CD8-positive, alpha-beta T cell (primary cell): ENCODE measurements at regions of chr2 and their contacts with region 1.

Region 1: GRCh38 chr2:105977212-105977611 is 216.9 kb downstream of the UXS1 start:
- DNase-seq: no peak
- ATAC-seq: no peak
- H3K4me3 ChIP-seq: no peak overlapping the region
- H3K4me3 Mint-ChIP-seq: no peak overlapping the region
- H3K27ac ChIP-seq: no peak overlapping the region
- H3K27ac Mint-ChIP-seq: peak overlapping the region; percentile 82
- H3K4me1 ChIP-seq: peaks cover 58% of the 10 kb centered on the region
- H3K4me1 Mint-ChIP-seq: peaks cover 52% of the 10 kb centered on the region
- H3K27me3 ChIP-seq: no peaks in the 10 kb centered on the region
- H3K27me3 Mint-ChIP-seq: no peaks in the 10 kb centered on the region
- CTCF ChIP-seq: no peak

Region 2: GRCh38 chr2:105990624-105991023 is 13.4 kb after region 1 on chr2:
- CTCF ChIA-PET with region 1: interaction called, 3 read pairs
- POLR2A ChIA-PET with region 1: interaction called, 3 read pairs
- intact Hi-C with region 1: loop called in 1 of 2 experiments (anchors 1 kb)
- DNase-seq: peak in 1 of 9 experiments; percentile 26
- ATAC-seq: no peak
- H3K4me3 ChIP-seq: no peak overlapping the region
- H3K4me3 Mint-ChIP-seq: no peak overlapping the region
- H3K27ac ChIP-seq: no peak overlapping the region
- H3K27ac Mint-ChIP-seq: no peak overlapping the region
- H3K4me1 ChIP-seq: peaks cover 26% of the 10 kb centered on the region
- H3K4me1 Mint-ChIP-seq: peaks cover 11% of the 10 kb centered on the region
- H3K27me3 ChIP-seq: no peaks in the 10 kb centered on the region
- H3K27me3 Mint-ChIP-seq: no peaks in the 10 kb centered on the region
- CTCF ChIP-seq: no peak

Region 3: GRCh38 chr2:106115250-106115649 is 138.0 kb after region 1 on chr2:
- CTCF ChIA-PET with region 1: no interaction called
- POLR2A ChIA-PET with region 1: no interaction called
- intact Hi-C with region 1: no loop called
- DNase-seq: no peak
- ATAC-seq: no peak
- H3K4me3 ChIP-seq: no peak overlapping the region
- H3K4me3 Mint-ChIP-seq: no peak overlapping the region
- H3K27ac ChIP-seq: peak overlapping the region in 1 of 2 experiments; percentile 14
- H3K27ac Mint-ChIP-seq: peak overlapping the region; percentile 66
- H3K4me1 ChIP-seq: no peaks in the 10 kb centered on the region
- H3K4me1 Mint-ChIP-seq: peaks cover 13% of the 10 kb centered on the region
- H3K27me3 ChIP-seq: no peaks in the 10 kb centered on the region
- H3K27me3 Mint-ChIP-seq: no peaks in the 10 kb centered on the region
- CTCF ChIP-seq: no peak

Region 4: DNA sequence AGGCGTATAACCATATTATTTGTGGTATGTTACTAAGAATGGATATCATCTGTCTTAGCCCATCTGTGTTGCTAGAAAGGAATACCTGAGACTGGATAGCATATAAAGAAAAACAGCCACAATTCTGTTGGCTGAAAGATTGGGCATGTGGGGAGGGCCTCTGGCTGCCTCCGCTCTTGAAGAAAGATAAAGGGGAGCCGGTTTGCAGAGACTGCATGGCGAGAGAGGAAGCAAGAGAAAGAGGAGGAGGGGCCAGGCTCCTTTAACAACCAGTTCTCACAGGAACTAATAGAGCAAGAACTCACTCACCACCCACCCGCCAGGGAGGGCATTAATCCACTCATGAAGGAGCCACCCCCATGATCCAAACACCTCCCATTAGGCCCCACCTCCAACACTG is 246.1 kb after region 1 on chr2:
- CTCF ChIA-PET with region 1: no interaction called
- POLR2A ChIA-PET with region 1: no interaction called
- intact Hi-C with region 1: no loop called
- DNase-seq: no peak
- ATAC-seq: no peak
- H3K4me3 ChIP-seq: no peak overlapping the region
- H3K4me3 Mint-ChIP-seq: no peak overlapping the region
- H3K27ac ChIP-seq: no peak overlapping the region
- H3K27ac Mint-ChIP-seq: no peak overlapping the region
- H3K4me1 ChIP-seq: no peaks in the 10 kb centered on the region
- H3K4me1 Mint-ChIP-seq: no peaks in the 10 kb centered on the region
- H3K27me3 ChIP-seq: no peaks in the 10 kb centered on the region
- H3K27me3 Mint-ChIP-seq: no peaks in the 10 kb centered on the region
- CTCF ChIP-seq: no peak